Activated naive CD8-positive, alpha-beta T cell treated with anti-CD3 and anti-CD28 coated beads, Interleukin-2, amount 10 ng/mL, durations not matched to agents 7 days and 5 days (primary cell): ENCODE measurements at regions of chr10 and their contacts with region 1.

Region 1: DNA sequence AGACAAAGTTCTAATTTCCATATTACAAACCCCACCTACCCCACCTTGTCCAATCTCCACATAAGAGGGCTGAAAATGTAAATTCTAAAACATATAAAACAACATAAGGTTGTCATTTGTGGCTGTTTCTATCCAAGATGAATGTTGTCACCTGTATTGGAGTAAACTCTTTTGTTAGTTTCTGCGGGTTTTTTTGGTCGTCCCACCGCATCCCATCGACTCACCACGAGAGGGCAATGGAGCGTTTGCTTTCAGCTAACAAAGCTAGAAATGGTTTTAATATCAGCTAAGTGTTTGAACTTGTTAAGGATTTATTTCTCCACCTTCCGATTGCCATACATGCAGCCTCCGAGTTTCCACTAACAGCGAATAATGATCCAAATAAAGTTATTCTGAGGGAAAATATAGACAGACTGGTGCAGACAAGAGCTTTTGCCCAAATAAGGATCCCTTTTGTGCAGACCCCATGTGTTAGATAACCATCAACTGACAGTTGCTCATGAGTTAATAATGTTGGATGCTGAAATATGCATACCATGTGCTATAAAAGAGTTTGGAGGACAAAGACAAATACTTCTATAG is 137.2 kb downstream of the ARID5B start:
- DNase-seq: peak; percentile 67
- ATAC-seq: peak; percentile 67
- H3K4me3 Mint-ChIP-seq: peak overlapping the region; percentile 36
- H3K27ac Mint-ChIP-seq: peak overlapping the region; percentile 80
- H3K4me1 Mint-ChIP-seq: peaks cover 53% of the 10 kb centered on the region
- H3K27me3 Mint-ChIP-seq: no peaks in the 10 kb centered on the region

Region 2: DNA sequence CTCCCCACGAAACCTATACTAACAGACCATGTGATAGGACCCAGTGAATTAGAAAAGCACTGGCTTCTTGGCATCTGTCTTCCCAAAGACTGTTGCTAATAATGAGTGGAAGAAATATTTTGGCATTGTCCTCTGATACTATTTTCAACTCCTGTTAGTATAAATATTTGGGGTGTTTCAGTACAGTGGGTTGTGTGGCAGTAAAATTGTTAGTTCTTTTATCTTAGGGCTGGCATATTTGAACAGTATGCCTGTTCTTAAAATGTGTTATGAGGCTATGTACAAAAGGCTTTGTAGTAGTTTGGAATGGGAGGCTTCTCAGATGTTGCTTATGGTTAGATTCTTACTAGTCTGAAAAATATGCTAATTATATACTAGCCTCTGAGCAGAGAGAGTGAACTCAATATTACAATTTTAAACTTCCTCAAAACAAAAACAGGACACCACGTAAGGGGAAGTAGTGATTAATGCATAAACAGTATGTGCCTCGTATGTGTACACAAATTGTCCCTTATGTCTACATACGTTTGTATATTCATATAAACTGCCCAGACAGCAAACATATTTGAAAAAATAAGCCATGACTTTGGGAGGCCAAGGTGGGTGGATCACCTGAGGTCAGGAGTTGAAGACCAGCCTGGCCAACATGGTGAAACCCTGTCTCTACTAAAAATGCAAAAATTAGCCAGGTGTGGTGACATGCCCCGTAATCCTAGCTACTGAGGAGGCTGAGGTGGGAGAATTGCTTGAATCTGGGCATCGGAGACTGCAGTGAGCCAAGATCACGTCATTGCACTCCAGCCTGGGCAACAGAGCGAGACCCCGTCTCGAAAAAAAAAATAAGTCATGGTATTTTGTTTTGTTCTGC is 21.8 kb before region 1 on chr10:
- POLR2A ChIA-PET with region 1: no interaction called
- DNase-seq: no peak
- ATAC-seq: no peak
- H3K4me3 Mint-ChIP-seq: no peak overlapping the region
- H3K27ac Mint-ChIP-seq: no peak overlapping the region
- H3K4me1 Mint-ChIP-seq: peaks cover 7% of the 10 kb centered on the region
- H3K27me3 Mint-ChIP-seq: no peaks in the 10 kb centered on the region

Region 3: GRCh38 chr10:62149621-62150020 is 110.9 kb after region 1 on chr10:
- POLR2A ChIA-PET with region 1: no interaction called
- DNase-seq: no peak
- ATAC-seq: no peak
- H3K4me3 Mint-ChIP-seq: no peak overlapping the region
- H3K27ac Mint-ChIP-seq: no peak overlapping the region
- H3K4me1 Mint-ChIP-seq: peaks cover 11% of the 10 kb centered on the region
- H3K27me3 Mint-ChIP-seq: no peaks in the 10 kb centered on the region

Region 4: GRCh38 chr10:62244780-62245467 is 206.2 kb after region 1 on chr10:
- POLR2A ChIA-PET with region 1: interaction called, 19 read pairs
- DNase-seq: no peak
- ATAC-seq: peak; percentile 87
- H3K4me3 Mint-ChIP-seq: peak overlapping the region; percentile 59
- H3K27ac Mint-ChIP-seq: peak overlapping the region; percentile 65
- H3K4me1 Mint-ChIP-seq: peaks cover 31% of the 10 kb centered on the region
- H3K27me3 Mint-ChIP-seq: no peaks in the 10 kb centered on the region

Region 5: DNA sequence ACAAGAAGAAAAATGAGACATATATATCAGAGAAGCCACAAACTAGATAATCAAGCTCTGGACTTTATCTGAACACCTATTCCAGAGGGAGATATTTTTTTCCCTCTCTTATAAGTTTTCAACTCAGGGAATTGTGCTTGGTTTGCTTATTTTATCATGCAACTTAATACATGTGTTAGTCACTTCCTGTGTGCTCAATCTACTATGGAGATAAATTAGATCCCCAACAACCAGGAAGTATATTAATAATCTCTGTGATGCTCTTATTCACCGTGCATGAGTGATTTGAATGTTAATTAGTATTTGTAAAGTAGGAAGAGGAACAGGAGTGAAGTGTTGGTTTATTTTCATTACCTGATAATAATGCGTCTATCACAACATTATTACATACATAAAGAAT is 296.6 kb after region 1 on chr10:
- POLR2A ChIA-PET with region 1: no interaction called
- DNase-seq: no peak
- ATAC-seq: no peak
- H3K4me3 Mint-ChIP-seq: no peak overlapping the region
- H3K27ac Mint-ChIP-seq: no peak overlapping the region
- H3K4me1 Mint-ChIP-seq: no peaks in the 10 kb centered on the region
- H3K27me3 Mint-ChIP-seq: peaks cover 4% of the 10 kb centered on the region